Naive thymus-derived CD4-positive, alpha-beta T cell (primary cell): ENCODE measurements at regions of chr10 and their contacts with region 1.

Region 1: DNA sequence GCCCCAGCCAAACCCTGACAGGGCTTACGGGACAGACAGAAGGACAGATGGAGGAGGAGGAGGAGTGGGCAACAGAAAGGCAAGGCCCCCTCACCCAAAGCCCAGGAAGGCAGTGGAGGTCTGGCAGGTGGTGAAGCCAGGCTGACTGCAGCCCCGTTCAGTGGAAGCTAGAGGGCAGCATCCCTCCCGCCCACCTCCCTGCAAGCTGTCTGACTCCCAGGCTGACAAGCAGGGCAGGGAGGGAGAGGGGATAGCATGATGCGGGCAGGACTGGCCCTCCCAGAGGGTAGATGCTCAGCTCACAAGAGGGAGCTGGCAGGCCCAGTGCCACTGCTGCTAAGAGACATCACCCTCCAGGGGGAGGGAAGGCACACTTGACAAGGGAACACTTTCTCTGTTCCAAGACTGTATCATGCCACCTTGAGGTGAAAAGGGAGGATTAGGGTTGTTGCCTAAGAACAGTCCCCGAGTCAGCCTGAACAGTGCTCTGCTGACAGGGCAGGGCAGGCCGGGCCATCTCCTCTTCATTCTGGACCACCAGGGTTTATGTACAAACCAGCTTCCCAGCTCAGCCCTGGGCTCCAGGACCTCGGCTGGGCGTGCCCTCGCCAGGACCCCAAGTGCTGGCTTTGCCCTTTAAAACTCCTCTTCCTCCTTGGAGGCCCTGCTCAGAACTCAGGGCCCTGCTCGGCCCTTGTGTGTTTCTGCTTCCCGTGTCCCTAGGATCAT is 61.8 kb downstream of the RASGEF1A start:
- DNase-seq: peak in 8 of 9 donors; percentile 25 to 52 (median 44)
- ATAC-seq: peak; percentile 69
- H3K4me3 ChIP-seq: no peak overlapping the region
- H3K4me3 Mint-ChIP-seq: no peak overlapping the region
- H3K27ac ChIP-seq: no peak overlapping the region
- H3K27ac Mint-ChIP-seq: peak overlapping the region in 2 of 9 donors; percentile 38 to 69
- H3K4me1 ChIP-seq: peaks cover 0 to 5% of the 10 kb centered on the region in 2 donors
- H3K4me1 Mint-ChIP-seq: peaks cover 0 to 9% (median 6%) of the 10 kb centered on the region in 7 donors
- H3K27me3 ChIP-seq: no peaks in the 10 kb centered on the region
- H3K27me3 Mint-ChIP-seq: no peaks in the 10 kb centered on the region

Region 2: DNA sequence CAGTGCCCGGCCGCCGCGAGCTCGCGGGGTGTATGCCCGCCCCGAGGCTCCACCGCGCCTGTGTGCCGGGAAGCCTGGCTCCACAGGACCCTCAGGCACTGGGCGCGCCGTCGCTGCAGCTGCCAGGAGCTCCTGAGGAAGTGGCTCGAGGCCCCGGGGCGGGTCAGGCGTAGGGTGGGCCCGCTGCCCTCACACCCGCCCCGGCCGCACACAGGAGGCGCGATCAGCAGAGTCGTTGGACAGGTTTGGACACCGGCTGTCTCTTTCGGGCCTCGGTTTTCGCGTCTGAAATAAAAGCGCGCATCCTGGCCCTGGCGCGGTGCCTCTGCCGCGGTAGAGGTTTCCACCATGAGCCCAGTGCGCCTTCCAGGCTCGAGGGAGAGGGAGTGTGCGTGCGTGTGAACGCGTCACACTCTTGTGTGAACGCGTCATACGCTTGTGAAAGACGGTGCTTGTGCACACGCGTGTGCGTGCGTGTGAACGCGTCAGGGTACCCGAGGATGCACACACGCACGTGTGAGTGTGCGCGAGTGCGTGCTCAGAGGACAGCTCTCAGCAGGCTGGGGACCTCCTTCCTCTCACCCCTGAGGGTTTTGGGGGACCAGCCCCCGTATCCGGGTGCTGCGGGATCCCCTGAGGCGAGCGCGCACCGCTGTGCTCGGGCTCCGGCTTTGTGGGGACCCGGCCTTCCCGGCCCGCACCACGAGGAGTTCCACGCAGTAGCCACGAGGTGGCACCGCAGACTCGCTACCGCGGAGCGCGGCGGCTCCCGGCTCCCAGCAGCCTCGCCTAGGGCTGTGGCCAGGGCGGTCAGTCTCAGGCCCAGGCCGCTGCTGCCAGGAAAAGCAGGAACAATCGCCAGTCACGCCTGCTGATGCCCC is 338.8 kb before region 1 on chr10:
- CTCF ChIA-PET with region 1: no interaction called
- POLR2A ChIA-PET with region 1: no interaction called
- intact Hi-C with region 1: loop called in 1 of 2 experiments (anchors 10 kb)
- DNase-seq: peak; percentile 26 to 56 (median 36)
- ATAC-seq: peak; percentile 82
- H3K4me3 ChIP-seq: no peak overlapping the region
- H3K4me3 Mint-ChIP-seq: peak overlapping the region in 5 of 10 donors; percentile 45 to 64 (median 51)
- H3K27ac ChIP-seq: no peak overlapping the region
- H3K27ac Mint-ChIP-seq: no peak overlapping the region
- H3K4me1 ChIP-seq: no peaks in the 10 kb centered on the region
- H3K4me1 Mint-ChIP-seq: peaks cover 0 to 11% (median 7%) of the 10 kb centered on the region in 7 donors
- H3K27me3 ChIP-seq: no peaks in the 10 kb centered on the region
- H3K27me3 Mint-ChIP-seq: peaks cover 27 to 45% (median 43%) of the 10 kb centered on the region in 5 donors

Region 3: GRCh38 chr10:43105102-43105785 is 99.9 kb before region 1 on chr10:
- CTCF ChIA-PET with region 1: no interaction called
- POLR2A ChIA-PET with region 1: no interaction called
- intact Hi-C with region 1: loop called in 1 of 2 experiments (anchors 1 kb)
- DNase-seq: peak; percentile 48 to 91 (median 75)
- ATAC-seq: peak; percentile 95
- H3K4me3 ChIP-seq: peak overlapping the region; percentile 60
- H3K4me3 Mint-ChIP-seq: peak overlapping the region; percentile 61 to 85 (median 76)
- H3K27ac ChIP-seq: no peak overlapping the region
- H3K27ac Mint-ChIP-seq: peak overlapping the region in 1 of 9 donors; percentile 49
- H3K4me1 ChIP-seq: peaks cover 0 to 8% of the 10 kb centered on the region in 2 donors
- H3K4me1 Mint-ChIP-seq: peaks cover 0 to 15% (median 7%) of the 10 kb centered on the region in 7 donors
- H3K27me3 ChIP-seq: no peaks in the 10 kb centered on the region
- H3K27me3 Mint-ChIP-seq: peaks cover 15 to 26% (median 26%) of the 10 kb centered on the region in 5 donors

Region 4: DNA sequence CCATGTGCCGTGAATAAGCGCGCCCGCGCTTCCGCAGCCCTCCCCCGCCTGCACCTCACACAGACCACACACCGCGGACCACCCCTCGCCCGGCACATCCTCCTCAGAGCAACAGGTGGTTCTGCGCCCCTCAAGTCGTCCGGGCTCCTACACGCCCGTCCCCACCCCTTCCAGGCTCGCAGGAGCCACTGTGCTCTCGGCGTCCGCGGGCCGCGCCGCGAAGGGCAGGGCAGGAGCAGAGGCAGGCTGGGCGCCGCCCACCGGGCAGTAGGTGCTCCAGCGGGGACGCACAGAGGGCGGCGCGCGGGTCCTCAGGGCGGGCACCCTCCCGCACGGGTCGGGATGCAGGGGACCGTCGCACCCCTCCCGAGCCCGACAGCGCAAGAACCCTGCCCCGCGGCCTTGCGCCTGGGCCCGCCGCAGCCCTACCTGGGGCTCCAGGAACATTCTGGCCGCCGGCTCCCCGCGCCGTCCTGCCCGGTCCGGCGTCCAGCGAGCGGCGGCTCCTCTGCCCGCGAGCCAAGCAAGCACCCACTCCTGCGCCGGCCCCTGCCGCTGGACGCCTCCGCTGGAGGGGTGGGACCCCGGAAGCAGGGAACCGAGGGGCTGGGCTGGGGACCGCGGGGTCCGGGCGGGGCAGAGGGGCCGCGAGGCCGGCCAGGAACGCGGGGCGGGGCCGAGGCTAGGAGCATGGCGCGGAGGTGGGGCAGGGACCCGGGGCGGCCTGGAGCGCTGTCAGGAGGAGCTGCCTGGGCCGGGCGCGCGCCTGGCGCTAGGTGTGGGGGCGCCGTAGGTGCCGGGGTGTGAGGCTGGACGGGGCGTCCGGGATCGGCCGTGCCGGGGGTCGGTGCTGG is 24.3 kb after region 1 on chr10:
- CTCF ChIA-PET with region 1: no interaction called
- POLR2A ChIA-PET with region 1: no interaction called
- intact Hi-C with region 1: loop called in 1 of 2 experiments (anchors 2 kb)
- DNase-seq: peak in 2 of 9 donors; percentile 7 to 46
- ATAC-seq: peak; percentile 45
- H3K4me3 ChIP-seq: peak overlapping the region; percentile 35
- H3K4me3 Mint-ChIP-seq: peak overlapping the region; percentile 48 to 84 (median 60)
- H3K27ac ChIP-seq: no peak overlapping the region
- H3K27ac Mint-ChIP-seq: no peak overlapping the region
- H3K4me1 ChIP-seq: peaks cover 0 to 60% of the 10 kb centered on the region in 2 donors
- H3K4me1 Mint-ChIP-seq: peaks cover 7 to 33% (median 16%) of the 10 kb centered on the region in 7 donors
- H3K27me3 ChIP-seq: no peaks in the 10 kb centered on the region
- H3K27me3 Mint-ChIP-seq: peaks cover 8 to 48% (median 26%) of the 10 kb centered on the region in 5 donors

Region 5: GRCh38 chr10:43244783-43245182 is 39.7 kb after region 1 on chr10:
- CTCF ChIA-PET with region 1: no interaction called
- POLR2A ChIA-PET with region 1: no interaction called
- intact Hi-C with region 1: no loop called
- DNase-seq: no peak
- ATAC-seq: no peak
- H3K4me3 ChIP-seq: no peak overlapping the region
- H3K4me3 Mint-ChIP-seq: no peak overlapping the region
- H3K27ac ChIP-seq: no peak overlapping the region
- H3K27ac Mint-ChIP-seq: no peak overlapping the region
- H3K4me1 ChIP-seq: no peaks in the 10 kb centered on the region
- H3K4me1 Mint-ChIP-seq: no peaks in the 10 kb centered on the region
- H3K27me3 ChIP-seq: no peaks in the 10 kb centered on the region
- H3K27me3 Mint-ChIP-seq: peaks cover 0 to 49% (median 7%) of the 10 kb centered on the region in 5 donors

Region 6: GRCh38 chr10:43292755-43293676 is 87.9 kb after region 1 on chr10:
- CTCF ChIA-PET with region 1: interaction called, 4 read pairs
- POLR2A ChIA-PET with region 1: no interaction called
- intact Hi-C with region 1: loop called in 1 of 2 experiments (anchors 5 kb)
- DNase-seq: peak in 6 of 9 donors; percentile 22 to 51 (median 44)
- ATAC-seq: peak; percentile 72
- H3K4me3 ChIP-seq: no peak overlapping the region
- H3K4me3 Mint-ChIP-seq: peak overlapping the region; percentile 13 to 75 (median 55)
- H3K27ac ChIP-seq: no peak overlapping the region
- H3K27ac Mint-ChIP-seq: peak overlapping the region in 6 of 9 donors; percentile 65 to 84 (median 78)
- H3K4me1 ChIP-seq: peaks cover 31 to 35% of the 10 kb centered on the region in 2 donors
- H3K4me1 Mint-ChIP-seq: peaks cover 16 to 83% (median 34%) of the 10 kb centered on the region in 7 donors
- H3K27me3 ChIP-seq: no peaks in the 10 kb centered on the region
- H3K27me3 Mint-ChIP-seq: peaks cover 0 to 15% (median 6%) of the 10 kb centered on the region in 5 donors

Region 7: GRCh38 chr10:43361986-43362839 is 157.1 kb after region 1 on chr10:
- CTCF ChIA-PET with region 1: interaction called, 3 read pairs
- POLR2A ChIA-PET with region 1: no interaction called
- intact Hi-C with region 1: loop called in 1 of 2 experiments (anchors 5 kb)
- DNase-seq: peak; percentile 86 to 98 (median 97)
- ATAC-seq: peak; percentile 98
- H3K4me3 ChIP-seq: peak overlapping the region; percentile 92
- H3K4me3 Mint-ChIP-seq: peak overlapping the region; percentile 92 to 100 (median 97)
- H3K27ac ChIP-seq: peak overlapping the region; percentile 88
- H3K27ac Mint-ChIP-seq: peak overlapping the region; percentile 96 to 99 (median 97)
- H3K4me1 ChIP-seq: peaks cover 4 to 14% of the 10 kb centered on the region in 2 donors
- H3K4me1 Mint-ChIP-seq: peaks cover 13 to 33% (median 29%) of the 10 kb centered on the region in 7 donors
- H3K27me3 ChIP-seq: no peaks in the 10 kb centered on the region
- H3K27me3 Mint-ChIP-seq: no peaks in the 10 kb centered on the region

Region 8: DNA sequence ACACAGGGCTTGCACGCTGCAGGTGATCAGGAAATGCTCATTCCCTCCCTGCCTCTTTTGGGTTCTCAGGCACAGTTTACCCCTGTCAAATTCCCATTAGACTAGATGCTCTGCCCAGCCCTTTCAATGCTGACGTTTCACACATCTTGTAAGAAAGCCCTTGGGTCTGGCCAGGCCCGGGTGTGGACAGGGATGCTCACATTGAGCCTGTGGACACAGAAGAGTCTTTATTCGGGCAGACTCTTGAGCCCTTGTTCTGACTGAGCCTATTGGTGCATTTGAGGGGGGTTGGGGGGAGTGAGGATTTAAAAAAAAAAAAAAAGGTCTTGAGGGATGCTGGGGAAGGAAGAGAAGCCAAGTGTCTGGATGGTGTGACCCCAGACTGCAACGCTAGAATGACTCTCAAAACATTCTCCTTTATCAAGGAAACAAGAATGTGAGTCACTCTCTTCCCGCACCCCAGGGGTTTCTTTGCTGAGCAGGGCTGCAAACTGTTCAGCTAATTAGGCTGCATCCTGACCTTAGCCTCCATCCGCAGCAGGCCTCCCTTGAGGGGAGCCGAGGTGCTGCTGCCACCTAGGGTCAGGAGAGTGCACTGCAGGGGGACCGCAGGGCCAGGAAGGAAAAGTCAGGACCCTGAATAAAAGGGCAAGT is 1652.4 kb after region 1 on chr10:
- CTCF ChIA-PET with region 1: no interaction called
- POLR2A ChIA-PET with region 1: no interaction called
- intact Hi-C with region 1: no loop called
- DNase-seq: peak in 6 of 9 donors; percentile 27 to 69 (median 43)
- ATAC-seq: peak; percentile 79
- H3K4me3 ChIP-seq: no peak overlapping the region
- H3K4me3 Mint-ChIP-seq: no peak overlapping the region
- H3K27ac ChIP-seq: no peak overlapping the region
- H3K27ac Mint-ChIP-seq: peak overlapping the region in 1 of 9 donors; percentile 74
- H3K4me1 ChIP-seq: no peaks in the 10 kb centered on the region
- H3K4me1 Mint-ChIP-seq: no peaks in the 10 kb centered on the region
- H3K27me3 ChIP-seq: no peaks in the 10 kb centered on the region
- H3K27me3 Mint-ChIP-seq: peaks cover 3 to 7% (median 4%) of the 10 kb centered on the region in 5 donors